ENCODE measurements at regions of chr7 and their contacts with region 1.

Region 1: DNA sequence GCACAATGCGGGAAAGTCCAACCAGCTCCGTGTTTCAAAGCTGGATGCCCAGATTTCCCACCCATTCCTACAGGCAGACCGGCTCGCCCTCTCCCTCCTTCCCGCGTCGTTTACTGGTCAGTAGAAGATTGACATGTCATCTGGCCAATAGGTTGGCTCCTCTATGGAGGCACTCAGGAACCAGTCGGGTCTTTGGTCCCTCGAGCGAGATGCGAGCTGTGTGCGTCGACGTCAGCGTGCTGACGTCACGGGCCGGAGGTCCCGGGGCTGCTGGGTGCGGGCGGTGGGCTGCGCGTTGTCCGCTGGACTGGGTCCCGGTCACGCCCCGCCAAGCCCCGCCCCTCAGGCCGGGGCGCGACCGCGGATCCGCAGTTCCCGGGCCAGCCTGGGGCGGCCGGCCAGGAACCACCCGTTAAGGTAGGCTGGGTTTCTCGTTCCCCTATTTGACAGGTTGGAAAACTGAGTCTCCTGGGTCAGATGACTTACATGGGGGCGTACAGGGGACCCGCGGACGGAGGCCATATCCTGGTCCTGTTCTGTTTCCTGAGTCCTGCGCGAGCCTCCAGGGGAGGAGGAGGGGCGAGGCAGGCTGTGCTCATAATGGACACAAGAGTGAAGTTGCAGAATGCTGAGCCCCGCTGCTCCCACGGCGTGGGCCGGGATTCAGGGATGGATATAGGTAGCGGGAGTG is at the start of gene STARD3NL:
- DNase-seq: peak; percentile 81
- ATAC-seq: peak; percentile 96
- H3K4me3 Mint-ChIP-seq: peak within 1 kb of the TSS; percentile 97
- H3K27ac Mint-ChIP-seq: peak within 1 kb of the TSS; percentile 93
- H3K4me1 Mint-ChIP-seq: peaks cover 36% of the 10 kb centered on the region
- H3K27me3 Mint-ChIP-seq: no peaks in the 10 kb centered on the region
- CTCF ChIP-seq: no peak
- total RNA-seq, gene STARD3NL: 16.2 and 17.4 TPM in 2 replicates

Region 2: GRCh38 chr7:37786741-37787569 is 391.2 kb before region 1 on chr7:
- CTCF ChIA-PET with region 1: no interaction called
- POLR2A ChIA-PET with region 1: no interaction called
- intact Hi-C with region 1: loop called (anchors 10 kb)
- DNase-seq: no peak
- ATAC-seq: peak; percentile 89
- H3K4me3 Mint-ChIP-seq: peak overlapping the region; percentile 74
- H3K27ac Mint-ChIP-seq: peak overlapping the region; percentile 99
- H3K4me1 Mint-ChIP-seq: peaks cover 41% of the 10 kb centered on the region
- H3K27me3 Mint-ChIP-seq: no peaks in the 10 kb centered on the region
- CTCF ChIP-seq: no peak

Region 3: DNA sequence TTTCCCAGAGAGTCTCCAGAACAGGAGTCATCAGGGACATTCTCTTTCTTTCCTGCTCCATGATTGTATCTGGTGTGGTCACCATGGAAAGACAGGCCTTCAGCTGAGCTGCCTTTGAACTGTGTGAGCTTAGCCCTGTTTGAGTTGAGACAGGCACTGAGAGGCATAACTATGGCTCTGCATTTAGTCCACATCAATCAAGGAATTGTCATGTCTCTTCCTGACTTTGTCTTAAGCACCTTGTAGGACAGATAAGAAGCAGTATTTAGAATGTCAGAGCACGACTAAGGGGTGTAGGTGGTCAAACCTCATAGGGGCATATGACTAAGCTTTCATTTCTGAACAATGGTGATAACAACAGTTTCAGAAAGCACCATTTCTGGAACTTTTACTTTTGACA is 204.2 kb before region 1 on chr7:
- CTCF ChIA-PET with region 1: no interaction called
- POLR2A ChIA-PET with region 1: no interaction called
- intact Hi-C with region 1: no loop called
- DNase-seq: no peak
- ATAC-seq: no peak
- H3K4me3 Mint-ChIP-seq: no peak overlapping the region
- H3K27ac Mint-ChIP-seq: no peak overlapping the region
- H3K4me1 Mint-ChIP-seq: no peaks in the 10 kb centered on the region
- H3K27me3 Mint-ChIP-seq: peaks cover 2% of the 10 kb centered on the region
- CTCF ChIP-seq: no peak

Region 4: DNA sequence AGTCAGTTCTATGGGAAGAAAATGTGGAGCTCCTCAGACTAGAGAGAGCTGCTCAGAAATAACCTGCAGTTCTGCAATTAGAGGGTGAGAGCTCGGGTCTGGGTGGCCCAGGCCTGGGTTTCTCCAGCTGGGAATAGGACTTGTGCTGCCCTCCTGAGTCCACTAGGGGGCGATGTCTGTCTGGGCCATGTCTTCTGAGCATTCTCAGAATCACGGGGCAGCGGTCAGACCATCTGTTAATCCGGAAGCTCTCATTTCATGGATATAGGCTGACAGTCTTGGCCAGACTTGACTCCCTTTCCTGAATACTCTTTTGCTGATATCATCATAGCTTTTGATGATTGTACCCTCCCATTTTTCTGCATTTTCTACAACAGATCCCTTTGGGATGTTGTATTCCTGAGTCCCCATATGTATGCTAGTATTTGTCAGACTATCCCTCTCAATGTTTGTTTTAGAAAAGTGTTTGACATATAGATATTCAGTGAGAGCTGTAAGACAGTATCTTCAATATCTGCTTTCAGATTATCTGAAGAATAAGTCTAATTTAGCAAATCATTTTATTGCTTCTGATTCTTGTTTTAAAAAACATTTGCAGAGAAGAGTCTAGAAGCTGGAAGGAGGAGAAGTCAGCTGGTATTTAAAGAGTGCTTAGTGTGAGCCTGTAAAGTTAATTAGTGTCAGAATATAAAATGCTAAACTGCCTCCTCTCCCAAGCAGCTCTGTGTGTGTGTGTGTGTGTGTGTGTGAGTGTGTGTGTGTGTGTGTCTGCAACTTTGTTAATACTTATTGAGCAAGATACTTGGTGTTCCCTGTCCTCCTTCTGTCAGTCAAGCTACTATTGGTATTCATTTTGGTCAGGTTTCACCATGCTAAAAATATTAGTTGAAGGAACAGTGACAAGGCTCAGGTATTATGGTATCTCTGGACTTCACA is 37.9 kb after region 1 on chr7:
- CTCF ChIA-PET with region 1: interaction called, 13 read pairs
- POLR2A ChIA-PET with region 1: no interaction called
- intact Hi-C with region 1: loop called (anchors 2 kb)
- DNase-seq: peak; percentile 40
- ATAC-seq: peak; percentile 97
- H3K4me3 Mint-ChIP-seq: no peak overlapping the region
- H3K27ac Mint-ChIP-seq: no peak overlapping the region
- H3K4me1 Mint-ChIP-seq: peaks cover 7% of the 10 kb centered on the region
- H3K27me3 Mint-ChIP-seq: no peaks in the 10 kb centered on the region
- CTCF ChIP-seq: peak; percentile 75

Region 5: GRCh38 chr7:38673795-38674194 is 495.6 kb after region 1 on chr7:
- CTCF ChIA-PET with region 1: no interaction called
- POLR2A ChIA-PET with region 1: no interaction called
- intact Hi-C with region 1: loop called (anchors 10 kb)
- DNase-seq: no peak
- ATAC-seq: no peak
- H3K4me3 Mint-ChIP-seq: no peak overlapping the region
- H3K27ac Mint-ChIP-seq: no peak overlapping the region
- H3K4me1 Mint-ChIP-seq: peaks cover 18% of the 10 kb centered on the region
- H3K27me3 Mint-ChIP-seq: peaks cover 6% of the 10 kb centered on the region
- CTCF ChIP-seq: no peak

Region 6: GRCh38 chr7:38908759-38909335 is 730.7 kb after region 1 on chr7 and contains the start of gene VPS41:
- CTCF ChIA-PET with region 1: no interaction called
- POLR2A ChIA-PET with region 1: no interaction called
- intact Hi-C with region 1: loop called (anchors 2 kb)
- DNase-seq: peak; percentile 56
- ATAC-seq: peak; percentile 96
- H3K4me3 Mint-ChIP-seq: peak within 1 kb of the TSS; percentile 98
- H3K27ac Mint-ChIP-seq: peak within 1 kb of the TSS; percentile 94
- H3K4me1 Mint-ChIP-seq: peaks cover 52% of the 10 kb centered on the region
- H3K27me3 Mint-ChIP-seq: peaks cover 2% of the 10 kb centered on the region
- CTCF ChIP-seq: no peak
- total RNA-seq, gene VPS41: 78.5 and 91.8 TPM in 2 replicates

Region 7: DNA sequence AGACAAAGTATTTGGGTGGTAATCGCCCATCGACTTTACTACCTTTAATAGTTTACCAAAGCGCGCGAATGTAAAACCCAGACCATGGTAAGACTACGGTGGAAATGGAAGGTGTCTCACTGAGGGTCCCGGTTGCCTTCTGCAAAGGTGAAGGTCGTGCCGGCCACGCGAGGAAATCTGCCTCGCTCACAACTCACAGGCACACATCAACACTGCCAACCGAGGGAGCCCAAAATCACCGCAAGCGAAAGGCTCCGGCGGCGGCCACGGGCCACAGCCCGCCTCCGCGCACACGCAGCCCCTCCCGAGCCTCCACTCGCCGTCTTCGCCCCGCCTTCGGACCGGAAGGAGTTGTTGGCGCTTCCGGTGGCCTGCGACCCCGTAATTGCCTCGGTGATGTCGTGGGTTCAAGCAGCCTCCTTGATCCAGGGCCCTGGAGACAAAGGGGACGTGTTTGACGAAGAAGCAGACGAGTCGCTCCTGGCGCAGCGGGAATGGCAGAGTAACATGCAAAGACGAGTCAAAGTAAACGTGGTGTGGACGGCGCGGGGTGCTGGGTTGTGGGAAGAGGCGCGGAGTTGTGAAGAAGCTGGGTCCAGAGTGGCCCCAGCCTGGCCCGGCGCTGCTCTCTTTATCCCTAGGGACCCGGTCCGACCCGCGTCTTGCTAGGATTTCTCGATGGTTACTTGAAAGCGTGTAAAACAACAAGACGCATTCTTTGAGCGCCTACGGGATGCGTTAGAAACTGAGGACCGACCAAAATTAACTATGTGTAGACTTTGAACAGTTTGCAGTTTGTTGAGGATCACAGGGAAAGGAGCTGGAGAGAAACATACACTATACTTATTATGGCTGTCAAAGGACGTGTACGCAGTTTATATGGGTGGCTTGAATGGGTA is 1388.1 kb after region 1 on chr7 and contains the start of gene YAE1:
- CTCF ChIA-PET with region 1: no interaction called
- POLR2A ChIA-PET with region 1: no interaction called
- intact Hi-C with region 1: loop called (anchors 5 kb)
- DNase-seq: peak; percentile 79
- ATAC-seq: peak; percentile 96
- H3K4me3 Mint-ChIP-seq: peak within 1 kb of the TSS; percentile 99
- H3K27ac Mint-ChIP-seq: peak within 1 kb of the TSS; percentile 91
- H3K4me1 Mint-ChIP-seq: peaks cover 22% of the 10 kb centered on the region
- H3K27me3 Mint-ChIP-seq: peaks cover 1% of the 10 kb centered on the region
- CTCF ChIP-seq: no peak
- total RNA-seq, gene YAE1: 13.3 and 16.1 TPM in 2 replicates

Region 8: GRCh38 chr7:40134428-40135316 is 1956.5 kb after region 1 on chr7 and contains the starts of genes MPLKIP and SUGCT:
- CTCF ChIA-PET with region 1: no interaction called
- POLR2A ChIA-PET with region 1: no interaction called
- intact Hi-C with region 1: loop called (anchors 10 kb)
- DNase-seq: peak; percentile 91
- ATAC-seq: peak; percentile 90
- H3K4me3 Mint-ChIP-seq: peak within 1 kb of the TSS; percentile 97
- H3K27ac Mint-ChIP-seq: peak within 1 kb of the TSS; percentile 97
- H3K4me1 Mint-ChIP-seq: peaks cover 35% of the 10 kb centered on the region
- H3K27me3 Mint-ChIP-seq: no peaks in the 10 kb centered on the region
- CTCF ChIP-seq: no peak
- total RNA-seq, gene MPLKIP: 29.9 and 35.1 TPM in 2 replicates
- total RNA-seq, gene SUGCT: 0.61 and 1.3 TPM in 2 replicates